Left ventricle myocardium superior (tissue), 1 donor: ENCODE measurements at regions of chr11 and their contacts with region 1.

Region 1: DNA sequence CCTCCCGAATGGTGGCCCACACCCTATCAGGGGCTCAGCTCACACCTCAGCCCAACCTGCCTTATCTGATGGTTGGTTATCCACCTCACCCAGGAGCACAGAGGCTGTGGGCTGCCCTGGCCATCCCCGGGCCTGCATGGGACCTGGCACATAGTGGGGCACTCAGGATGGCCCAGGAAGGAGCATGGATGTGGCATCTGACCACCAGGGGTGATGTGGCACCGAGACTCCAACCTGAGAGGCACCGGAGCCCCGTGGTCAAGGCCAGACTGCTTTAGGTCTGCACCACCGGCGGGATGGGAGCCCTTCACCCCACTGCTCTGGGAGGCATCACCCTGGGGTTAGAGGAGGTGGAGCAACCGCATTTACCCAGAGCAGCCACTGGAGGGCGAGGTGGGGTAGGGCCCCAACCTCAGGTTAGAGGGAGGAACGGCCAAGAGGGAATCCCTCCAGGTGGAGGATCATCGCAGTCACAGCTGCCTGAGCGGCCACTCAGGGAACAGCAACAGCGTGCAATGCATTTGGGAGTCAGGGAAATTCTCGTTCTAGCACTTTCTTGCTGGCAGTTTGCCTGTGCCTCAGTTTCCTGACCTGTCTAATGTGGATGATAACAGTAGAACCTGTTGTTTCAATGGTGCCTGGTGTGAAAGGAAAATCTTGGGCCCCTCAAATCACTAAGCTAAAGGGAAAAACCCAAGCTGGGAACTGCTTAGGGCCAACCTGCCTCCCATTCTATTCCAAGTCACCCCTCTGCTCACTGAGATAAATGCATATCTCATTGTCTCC is 52.9 kb upstream of the CARS1 start:
- DNase-seq: peak; percentile 66
- ATAC-seq: peak; percentile 88

Region 2: DNA sequence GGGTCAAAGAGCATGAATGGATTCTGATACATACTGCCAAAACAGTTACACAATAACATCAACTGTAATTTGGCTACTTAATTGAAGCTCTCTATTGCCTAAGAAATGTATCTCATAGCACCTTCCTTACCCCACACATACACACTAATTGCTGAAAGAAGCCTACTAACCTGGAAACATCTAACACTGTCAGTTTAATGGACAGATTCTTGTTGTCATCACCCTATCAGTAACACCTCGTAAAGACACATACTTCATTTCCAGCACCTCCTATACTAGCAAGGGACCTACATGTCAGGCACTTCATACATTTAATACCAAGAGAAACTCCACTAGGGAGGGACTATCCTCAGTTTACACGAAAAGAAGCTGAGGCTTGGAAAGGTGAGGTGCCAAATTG is 127.9 kb before region 1 on chr11:
- intact Hi-C with region 1: no loop called
- DNase-seq: no peak
- ATAC-seq: peak; percentile 30

Region 3: DNA sequence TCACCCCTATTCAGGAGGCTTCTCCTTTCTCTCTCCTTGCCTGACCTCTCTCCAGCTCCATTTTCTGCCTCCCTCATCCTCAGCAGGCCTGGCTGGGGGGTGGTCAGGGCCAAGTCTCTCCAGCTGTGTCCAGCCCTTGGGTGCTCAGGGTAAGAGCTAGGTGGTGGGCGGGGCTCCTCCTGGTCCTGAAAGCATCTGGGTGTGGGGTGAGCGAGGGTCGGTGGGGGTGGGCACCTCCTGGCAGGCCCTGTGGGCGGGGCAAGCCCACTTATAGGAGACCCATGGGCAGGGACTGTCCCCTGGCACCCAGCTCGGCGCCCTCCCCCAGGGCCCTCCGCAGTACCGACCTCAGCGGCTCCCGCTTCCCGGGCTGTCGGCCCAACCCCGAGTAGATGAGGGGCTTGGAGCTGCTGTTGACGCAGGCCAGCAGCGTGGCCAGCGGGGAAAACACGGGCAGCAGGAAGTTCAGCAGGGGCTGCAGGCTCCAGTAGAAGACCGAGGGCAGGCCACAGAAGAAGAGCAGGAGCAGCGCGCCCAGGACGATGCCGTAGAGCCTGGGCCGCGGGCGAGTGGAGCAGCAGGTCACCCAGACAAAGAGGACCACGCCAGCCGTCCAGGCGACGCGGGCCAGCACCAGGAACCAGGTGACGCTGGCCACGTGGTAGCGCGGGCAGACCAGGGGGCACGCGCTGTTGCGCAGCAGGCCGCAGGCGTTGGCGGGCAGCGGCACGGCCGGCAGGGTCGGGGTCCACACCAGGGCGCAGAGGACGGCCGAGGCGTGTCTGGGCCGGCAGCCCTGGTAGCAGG is 107.8 kb after region 1 on chr11:
- intact Hi-C with region 1: loop called (anchors 10 kb)
- DNase-seq: peak; percentile 28
- ATAC-seq: no peak